T-cell (primary cell): ENCODE measurements at regions of chr20 and their contacts with region 1.

Region 1: DNA sequence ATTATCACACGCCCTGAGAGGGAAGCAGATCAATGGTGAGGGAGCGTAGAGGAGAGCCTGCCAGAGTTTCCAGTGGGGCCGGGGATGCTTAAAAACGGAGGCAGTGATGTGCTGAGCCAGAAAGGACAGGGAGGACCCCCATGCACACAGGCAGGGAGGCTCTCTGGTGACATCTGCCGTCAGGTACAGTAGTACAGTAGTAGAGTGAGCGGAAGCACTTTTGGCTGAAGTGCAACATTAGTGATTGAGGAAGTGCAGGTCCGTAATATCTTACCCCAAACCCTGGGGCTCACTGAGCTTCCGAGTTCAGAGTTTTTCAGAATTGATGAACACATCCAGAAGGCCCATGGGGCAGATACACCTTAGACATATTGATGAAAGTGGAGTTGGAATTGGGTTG is 42.1 kb downstream of the GFRA4 start:
- DNase-seq: no peak
- ATAC-seq: no peak
- H3K4me3 ChIP-seq: no peak overlapping the region
- H3K4me3 Mint-ChIP-seq: no peak overlapping the region
- H3K27ac ChIP-seq: no peak overlapping the region
- H3K27ac Mint-ChIP-seq: no peak overlapping the region
- H3K4me1 ChIP-seq: no peaks in the 10 kb centered on the region
- H3K4me1 Mint-ChIP-seq: no peaks in the 10 kb centered on the region
- H3K27me3 ChIP-seq: no peaks in the 10 kb centered on the region
- H3K27me3 Mint-ChIP-seq: no peaks in the 10 kb centered on the region

Region 2: DNA sequence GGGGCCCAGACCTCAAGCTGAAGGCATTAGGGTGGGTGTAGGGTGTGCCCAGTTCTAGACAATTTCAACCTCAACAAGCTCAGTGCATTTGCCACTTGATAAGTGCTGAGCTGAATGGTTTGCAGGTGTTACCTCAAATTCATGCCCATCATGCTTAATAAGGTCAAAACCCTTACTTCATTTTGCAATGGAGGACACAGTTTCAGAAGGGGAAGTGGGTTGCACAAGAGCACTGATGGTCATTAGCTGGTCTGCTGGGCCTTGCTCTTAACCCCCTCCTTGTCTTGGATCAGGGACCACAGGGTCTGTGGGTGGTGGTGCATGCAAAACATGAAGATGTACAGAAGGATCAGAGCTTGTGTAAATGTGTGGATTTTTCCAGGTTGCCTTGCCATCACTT is 1796.9 kb before region 1 on chr20:
- CTCF ChIA-PET with region 1: interaction called in 1 of 2 experiments, 12 read pairs
- POLR2A ChIA-PET with region 1: no interaction called
- DNase-seq: no peak
- ATAC-seq: no peak
- H3K4me3 ChIP-seq: no peak overlapping the region
- H3K4me3 Mint-ChIP-seq: no peak overlapping the region
- H3K27ac ChIP-seq: no peak overlapping the region
- H3K27ac Mint-ChIP-seq: no peak overlapping the region
- H3K4me1 ChIP-seq: no peaks in the 10 kb centered on the region
- H3K4me1 Mint-ChIP-seq: no peaks in the 10 kb centered on the region
- H3K27me3 ChIP-seq: peaks cover 0 to 35% of the 10 kb centered on the region in 2 experiments
- H3K27me3 Mint-ChIP-seq: peaks cover 24 to 29% of the 10 kb centered on the region in 2 donors